Activated CD4-positive, alpha-beta T cell treated with anti-CD3 and anti-CD28 coated beads, Interleukin-2, amount 10 ng/mL, durations not matched to agents 7 days and 5 days (primary cell): ENCODE measurements at regions of chr6 and their contacts with region 1.

Region 1: DNA sequence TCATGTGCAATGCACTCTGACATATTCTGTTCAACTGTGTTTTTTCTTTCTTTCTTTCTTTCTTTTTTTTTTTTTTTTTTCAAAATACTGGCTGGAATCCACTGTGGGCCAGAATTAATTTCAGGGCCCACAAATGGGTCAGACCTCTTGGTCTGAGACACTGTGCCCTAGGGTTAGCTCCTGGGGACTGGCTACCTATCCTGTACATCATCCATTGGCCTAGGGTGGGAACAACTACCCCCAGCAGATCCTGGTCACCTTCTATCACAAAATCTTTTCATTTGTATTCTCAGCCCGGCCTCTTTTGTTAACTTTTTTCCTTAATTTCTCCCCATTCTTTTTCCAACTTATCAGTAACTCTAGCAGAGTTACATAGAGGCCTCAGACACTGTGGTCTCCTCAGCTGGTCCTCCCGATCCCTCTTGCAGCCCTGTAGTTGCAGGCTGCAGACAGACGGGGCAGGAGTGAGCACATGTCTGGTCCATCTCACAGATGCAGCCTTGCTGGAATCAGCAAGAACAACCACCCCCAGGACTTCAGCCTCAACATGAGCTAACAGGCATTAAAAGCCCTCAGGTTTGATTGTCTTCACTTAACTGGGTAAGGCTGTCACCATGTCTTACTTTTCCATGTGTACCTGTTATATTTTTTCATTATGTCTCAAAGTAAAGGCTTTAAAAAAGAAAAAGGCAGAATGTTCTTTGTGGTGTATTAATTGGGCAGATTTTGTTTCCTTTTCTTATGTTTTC is 41.3 kb downstream of the TXLNB start:
- DNase-seq: peak; percentile 62
- H3K4me3 Mint-ChIP-seq: peak overlapping the region; percentile 28
- H3K27ac Mint-ChIP-seq: peak overlapping the region; percentile 90
- H3K4me1 Mint-ChIP-seq: peaks cover 46% of the 10 kb centered on the region
- H3K27me3 Mint-ChIP-seq: no peaks in the 10 kb centered on the region

Region 2: GRCh38 chr6:139187489-139187888 is 63.0 kb before region 1 on chr6:
- CTCF ChIA-PET with region 1: no interaction called
- POLR2A ChIA-PET with region 1: no interaction called
- DNase-seq: no peak
- H3K4me3 Mint-ChIP-seq: no peak overlapping the region
- H3K27ac Mint-ChIP-seq: no peak overlapping the region
- H3K4me1 Mint-ChIP-seq: peaks cover 21% of the 10 kb centered on the region
- H3K27me3 Mint-ChIP-seq: no peaks in the 10 kb centered on the region

Region 3: GRCh38 chr6:139239064-139239463 is 11.4 kb before region 1 on chr6:
- CTCF ChIA-PET with region 1: interaction called, 15 read pairs
- POLR2A ChIA-PET with region 1: no interaction called
- DNase-seq: no peak
- H3K4me3 Mint-ChIP-seq: no peak overlapping the region
- H3K27ac Mint-ChIP-seq: no peak overlapping the region
- H3K4me1 Mint-ChIP-seq: no peaks in the 10 kb centered on the region
- H3K27me3 Mint-ChIP-seq: no peaks in the 10 kb centered on the region

Region 4: GRCh38 chr6:139262519-139263300 is 12.2 kb after region 1 on chr6:
- CTCF ChIA-PET with region 1: interaction called, 18 read pairs
- POLR2A ChIA-PET with region 1: no interaction called
- DNase-seq: peak; percentile 34
- H3K4me3 Mint-ChIP-seq: peak overlapping the region; percentile 44
- H3K27ac Mint-ChIP-seq: peak overlapping the region; percentile 83
- H3K4me1 Mint-ChIP-seq: peaks cover 23% of the 10 kb centered on the region
- H3K27me3 Mint-ChIP-seq: no peaks in the 10 kb centered on the region